GM12878 (cell line): ENCODE measurements at regions of chr3 and their contacts with region 1.

Region 1: DNA sequence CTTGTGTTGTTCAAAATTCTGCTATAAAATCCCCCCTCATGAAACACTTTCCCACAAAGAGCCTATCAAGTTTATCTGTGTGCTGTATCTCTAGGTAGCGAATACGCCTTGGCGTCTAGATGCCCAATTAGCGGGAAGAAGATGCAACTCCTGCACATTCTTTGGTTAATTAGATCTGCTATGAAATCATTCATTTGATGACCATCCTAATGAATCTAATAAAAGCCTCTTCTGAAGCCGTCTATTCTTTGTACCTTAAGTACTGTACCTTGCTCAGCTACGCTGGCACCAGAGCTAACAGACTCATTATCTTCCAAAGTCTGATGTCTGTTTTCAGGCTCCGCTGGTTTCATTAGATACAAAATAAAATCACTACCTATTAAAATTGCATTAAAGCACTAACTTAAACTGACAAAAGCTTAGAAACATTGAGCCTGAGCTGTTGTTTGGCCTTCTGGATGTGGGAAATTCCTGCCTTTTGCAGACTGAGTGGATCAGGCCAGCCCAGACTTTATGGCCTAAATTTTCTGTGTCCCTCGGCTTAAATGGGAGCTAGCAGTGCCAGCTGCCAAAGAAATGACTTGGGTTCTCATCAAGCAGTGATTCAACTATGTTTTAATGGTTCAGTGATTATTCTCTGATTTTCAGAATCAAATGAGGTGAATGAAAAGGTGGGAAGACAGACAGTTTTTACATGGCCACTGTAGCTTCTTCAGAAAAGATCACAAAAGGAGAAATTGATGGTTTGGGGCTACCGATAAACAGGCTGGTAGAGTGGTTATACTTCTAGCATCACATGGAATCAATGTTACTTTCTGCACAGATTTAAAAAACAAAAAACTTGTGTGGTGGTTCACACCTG is 28.4 kb upstream of the CHST2 start:
- DNase-seq: no peak
- ATAC-seq: no peak
- H3K4me3 ChIP-seq: no peak overlapping the region
- H3K27ac ChIP-seq: no peak overlapping the region
- H3K4me1 ChIP-seq: no peaks in the 10 kb centered on the region
- H3K27me3 ChIP-seq: no peaks in the 10 kb centered on the region
- CTCF ChIP-seq: no peak
- EP300 ChIP-seq: no peak
- POLR2A ChIP-seq: no peak
- RAD21 ChIP-seq: no peak

Region 2: GRCh38 chr3:143103652-143104051 is 12.4 kb after region 1 on chr3:
- CTCF ChIA-PET with region 1: no interaction called
- POLR2A ChIA-PET with region 1: interaction called, 3 read pairs
- RAD21 ChIA-PET with region 1: no interaction called
- SMC1A ChIA-PET with region 1: interaction called, 12 read pairs
- in situ Hi-C with region 1: no loop called
- intact Hi-C with region 1: no loop called
- DNase-seq: no peak
- ATAC-seq: peak; percentile 94
- H3K4me3 ChIP-seq: no peak overlapping the region
- H3K27ac ChIP-seq: no peak overlapping the region
- H3K4me1 ChIP-seq: no peaks in the 10 kb centered on the region
- H3K27me3 ChIP-seq: no peaks in the 10 kb centered on the region
- CTCF ChIP-seq: no peak
- EP300 ChIP-seq: no peak
- POLR2A ChIP-seq: no peak
- RAD21 ChIP-seq: no peak